Dendritic cell treated with granulocyte-macrophage colony-stimulating factor and Interleukin-4, amounts not matched to agents 40 ng/mL and 50 ng/mL, for 4 days (primary cell): ENCODE measurements at regions of chr2 and their contacts with region 1.

Region 1: GRCh38 chr2:70948337-70949003 is 12.8 kb downstream of the ATP6V1B1 start:
- H3K4me3 Mint-ChIP-seq: peak overlapping the region; percentile 61
- H3K27ac Mint-ChIP-seq: no peak overlapping the region
- H3K4me1 Mint-ChIP-seq: peaks cover 16% of the 10 kb centered on the region
- H3K27me3 Mint-ChIP-seq: peaks cover 62% of the 10 kb centered on the region

Region 2: DNA sequence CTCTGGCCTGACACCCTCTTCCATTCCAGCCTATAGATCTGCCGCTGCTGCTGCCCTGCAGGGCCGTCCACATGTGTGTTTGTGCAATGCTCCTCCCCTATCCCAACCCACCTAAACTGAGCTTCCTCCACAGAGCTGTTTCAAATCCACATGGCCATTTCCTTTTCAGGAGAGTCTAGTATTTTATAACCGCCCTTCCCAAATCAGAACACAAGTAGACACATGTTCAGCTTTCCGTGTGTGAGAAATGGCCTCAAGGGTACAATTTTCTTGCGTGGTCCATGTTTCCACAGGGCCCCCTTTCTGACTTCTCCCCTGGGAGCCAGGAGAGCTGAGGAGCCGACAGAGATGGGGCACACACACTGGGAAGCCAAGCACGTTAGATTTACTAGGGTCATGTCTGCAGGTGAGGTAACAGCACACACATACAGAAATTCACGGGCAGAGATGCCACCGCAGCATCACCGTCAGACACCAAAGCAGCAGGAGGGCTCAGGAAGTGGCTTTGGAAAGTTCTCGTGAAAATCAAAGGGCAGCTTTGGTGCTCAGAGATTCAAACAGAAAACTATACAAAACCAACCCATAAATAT is 292.0 kb before region 1 on chr2:
- intact Hi-C with region 1: loop called (anchors 10 kb)
- H3K4me3 Mint-ChIP-seq: no peak overlapping the region
- H3K27ac Mint-ChIP-seq: no peak overlapping the region
- H3K4me1 Mint-ChIP-seq: peaks cover 12% of the 10 kb centered on the region
- H3K27me3 Mint-ChIP-seq: peaks cover 39% of the 10 kb centered on the region

Region 3: GRCh38 chr2:70977605-70978205 is 29.2 kb after region 1 on chr2:
- intact Hi-C with region 1: no loop called
- H3K4me3 Mint-ChIP-seq: peak overlapping the region; percentile 84
- H3K27ac Mint-ChIP-seq: peak overlapping the region; percentile 77
- H3K4me1 Mint-ChIP-seq: peaks cover 17% of the 10 kb centered on the region
- H3K27me3 Mint-ChIP-seq: peaks cover 29% of the 10 kb centered on the region